ENCODE measurements at regions of chr3 and their contacts with region 1.

Region 1: GRCh38 chr3:186821429-186822367 is 15.4 kb upstream of the RFC4 start:
- DNase-seq: no peak
- ATAC-seq: no peak
- H3K4me3 Mint-ChIP-seq: no peak overlapping the region
- H3K27ac Mint-ChIP-seq: no peak overlapping the region; the same call in 1 of the 2 replicates
- H3K4me1 Mint-ChIP-seq: peaks cover 28% of the 10 kb centered on the region
- H3K27me3 Mint-ChIP-seq: peaks cover 13% of the 10 kb centered on the region
- CTCF ChIP-seq: peak; percentile 47

Region 2: GRCh38 chr3:186400662-186401061 is 421.0 kb before region 1 on chr3:
- CTCF ChIA-PET with region 1: no interaction called
- POLR2A ChIA-PET with region 1: no interaction called
- DNase-seq: no peak
- ATAC-seq: no peak
- H3K4me3 Mint-ChIP-seq: no peak overlapping the region
- H3K27ac Mint-ChIP-seq: no peak overlapping the region
- H3K4me1 Mint-ChIP-seq: no peaks in the 10 kb centered on the region
- H3K27me3 Mint-ChIP-seq: no peaks in the 10 kb centered on the region
- CTCF ChIP-seq: no peak

Region 3: DNA sequence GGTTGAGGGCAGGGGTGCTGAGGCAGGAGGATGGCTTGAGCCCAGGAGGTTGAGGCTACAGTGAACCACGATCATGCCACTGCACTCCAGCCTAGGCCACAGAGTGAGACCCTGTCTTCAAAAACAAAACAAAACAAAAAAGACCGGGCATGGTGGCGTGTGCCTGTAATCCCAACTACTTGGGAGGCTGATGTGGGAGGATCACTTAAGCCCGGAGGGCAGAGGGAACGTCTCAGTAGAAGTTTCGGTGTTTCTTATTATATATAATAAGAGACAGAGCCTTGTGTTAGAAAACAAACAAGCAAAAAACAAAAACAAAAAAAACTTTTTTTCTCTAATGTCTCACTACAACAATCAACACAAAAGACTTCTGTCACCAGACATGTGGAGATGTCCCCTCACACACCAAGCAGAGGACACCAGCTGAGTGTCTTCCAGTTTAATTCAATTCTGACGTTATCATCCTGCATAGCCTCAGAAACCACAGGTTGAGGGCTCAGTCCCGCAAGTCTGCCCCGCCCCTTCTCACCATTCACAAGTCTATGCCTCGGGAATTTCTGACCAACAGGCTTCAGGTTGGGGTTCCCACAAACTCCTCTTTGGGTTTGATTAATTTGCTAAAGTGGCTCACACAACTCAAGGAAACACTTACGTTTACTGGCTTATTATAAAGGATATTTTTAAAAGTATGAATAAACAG is 62.3 kb before region 1 on chr3:
- CTCF ChIA-PET with region 1: no interaction called
- POLR2A ChIA-PET with region 1: no interaction called
- DNase-seq: peak; percentile 19
- ATAC-seq: peak; percentile 56
- H3K4me3 Mint-ChIP-seq: no peak overlapping the region
- H3K27ac Mint-ChIP-seq: no peak overlapping the region
- H3K4me1 Mint-ChIP-seq: peaks cover 12% of the 10 kb centered on the region
- H3K27me3 Mint-ChIP-seq: no peaks in the 10 kb centered on the region; the same call in 1 of the 2 replicates
- CTCF ChIP-seq: no peak

Region 4: DNA sequence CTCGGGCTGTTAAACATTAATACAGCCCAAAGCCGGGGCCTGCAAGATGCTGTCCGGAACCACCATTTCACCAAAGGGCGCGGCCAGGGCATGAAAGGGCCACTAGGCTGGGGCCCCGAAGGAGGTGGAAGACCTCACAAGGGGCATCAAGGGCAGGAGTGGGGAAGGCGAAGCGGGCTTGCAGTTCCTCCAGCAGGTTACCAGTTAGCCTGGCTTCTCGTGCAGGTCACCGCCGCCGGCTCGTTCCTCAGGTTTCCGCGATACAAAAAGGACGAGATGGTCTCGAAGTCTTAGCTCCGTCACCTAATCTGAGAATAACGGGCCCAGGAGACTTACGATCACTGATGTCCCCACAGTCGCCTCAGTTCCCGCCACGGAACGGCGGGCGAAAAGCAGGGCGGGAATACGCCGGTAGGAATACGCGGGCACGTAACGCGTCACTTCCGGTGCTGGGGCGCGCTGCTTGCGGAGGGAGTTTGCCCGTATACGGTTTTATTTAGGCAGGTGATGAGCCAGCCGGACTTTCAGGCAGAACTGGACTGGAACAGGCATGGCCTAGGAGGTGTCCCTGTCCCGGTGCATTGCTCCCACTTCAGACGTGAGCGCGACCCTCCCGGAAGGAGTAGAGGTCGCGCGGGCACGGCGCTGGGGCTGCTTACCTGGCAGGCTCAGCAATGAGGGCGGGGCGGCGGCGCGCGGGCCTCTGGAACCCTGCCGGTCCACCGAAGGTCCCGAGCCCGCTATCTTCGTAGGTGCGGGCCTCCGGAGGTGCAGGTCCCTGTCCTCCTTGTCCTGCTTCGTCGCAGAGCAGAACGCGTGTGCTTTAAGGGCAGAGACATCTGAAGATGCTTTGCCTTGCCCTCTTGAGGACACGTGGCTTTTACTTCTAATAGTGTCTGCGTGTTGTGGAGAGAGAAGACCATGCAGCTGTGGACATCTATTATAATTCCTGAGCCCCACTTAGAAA is 15.3 kb before region 1 on chr3 and contains the start of gene RFC4:
- CTCF ChIA-PET with region 1: interaction called, 10 read pairs
- POLR2A ChIA-PET with region 1: interaction called, 3 read pairs
- DNase-seq: peak; percentile 82
- ATAC-seq: peak; percentile 84
- H3K4me3 Mint-ChIP-seq: peak within 1 kb of the TSS; percentile 86
- H3K27ac Mint-ChIP-seq: peak within 1 kb of the TSS; percentile 90
- H3K4me1 Mint-ChIP-seq: peaks cover 16% of the 10 kb centered on the region
- H3K27me3 Mint-ChIP-seq: no peaks in the 10 kb centered on the region
- CTCF ChIP-seq: no peak
- total RNA-seq, gene RFC4: 89.2 to 104 TPM (median 91.8 TPM) in 3 replicates

Measured in WTC11 (cell line).